ENCODE measurements at regions of chr1 and their contacts with region 1.

Region 1: GRCh38 chr1:93080179-93080823 is 1.2 kb downstream of the MTF2 start:
- DNase-seq: no peak
- ATAC-seq: peak; percentile 31 to 52

Region 2: GRCh38 chr1:93007941-93008577 is 72.2 kb before region 1 on chr1:
- intact Hi-C with region 1: no loop called
- DNase-seq: no peak
- ATAC-seq: no peak

Region 3: DNA sequence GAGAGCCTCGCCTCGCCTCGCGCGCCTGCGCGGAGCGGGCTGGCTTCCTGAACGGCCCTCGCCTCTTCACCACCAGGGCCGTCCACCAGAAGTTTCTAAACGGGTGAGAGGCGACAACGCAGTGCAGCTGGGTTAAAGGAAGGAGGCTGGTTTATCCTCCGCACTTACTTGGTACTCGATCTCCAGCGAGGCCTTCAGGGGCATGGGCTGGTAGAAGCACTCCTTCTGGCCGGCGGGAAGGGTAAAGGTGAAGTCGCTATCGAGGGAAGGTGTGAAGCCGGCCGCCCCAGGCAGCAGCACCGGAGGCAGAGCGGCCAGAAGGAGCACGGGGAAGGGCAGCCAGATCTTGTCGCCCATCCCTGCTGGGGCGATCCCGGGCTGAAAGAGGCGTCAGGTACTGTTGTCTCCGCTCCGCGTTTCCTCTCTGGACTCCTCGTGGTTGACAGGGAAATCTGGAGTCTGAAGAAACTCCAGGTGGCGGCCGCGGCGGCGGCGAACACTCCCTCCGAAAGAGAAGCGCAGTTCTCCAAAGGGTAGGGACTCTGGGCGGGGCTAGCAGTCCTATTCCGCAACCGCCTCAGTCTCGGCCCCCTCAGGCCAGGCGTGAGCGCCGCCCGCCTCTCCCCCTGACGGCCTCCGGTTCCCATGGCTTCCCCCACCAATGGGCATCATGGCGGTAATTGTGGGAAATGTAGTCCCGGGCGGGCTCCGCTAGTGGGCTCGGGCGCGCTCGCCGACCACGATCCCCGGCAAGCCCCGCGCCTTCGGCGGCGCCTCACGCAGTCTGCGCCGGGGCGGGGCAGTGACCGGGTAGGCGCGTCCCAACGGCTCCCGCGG is 99.8 kb after region 1 on chr1 and contains the start of gene TMED5:
- intact Hi-C with region 1: loop called in 1 of 2 experiments (anchors 10 kb)
- DNase-seq: peak; percentile 98
- ATAC-seq: peak; percentile 98 to 99
- total RNA-seq, gene TMED5: 54.5 to 81.9 TPM

Measured in left cardiac atrium (tissue), 4 donors.